Activated CD4-positive, alpha-beta memory T cell treated with anti-CD3 and anti-CD28 coated beads, Interleukin-2, amount 10 ng/mL, durations not matched to agents 7 days and 5 days (primary cell): ENCODE measurements at regions of chr11 and their contacts with region 1.

Region 1: GRCh38 chr11:111982019-111982464 is 43.2 kb upstream of the DLAT start:
- DNase-seq: peak; percentile 61
- H3K4me3 Mint-ChIP-seq: no peak overlapping the region
- H3K27ac Mint-ChIP-seq: no peak overlapping the region
- H3K4me1 Mint-ChIP-seq: peaks cover 7% of the 10 kb centered on the region
- H3K27me3 Mint-ChIP-seq: peaks cover 2% of the 10 kb centered on the region

Region 2: GRCh38 chr11:111932611-111932950 is 49.5 kb before region 1 on chr11:
- CTCF ChIA-PET with region 1: interaction called, 178 read pairs
- POLR2A ChIA-PET with region 1: interaction called, 12 read pairs
- DNase-seq: no peak
- H3K4me3 Mint-ChIP-seq: peak overlapping the region; percentile 49
- H3K27ac Mint-ChIP-seq: peak overlapping the region; percentile 19
- H3K4me1 Mint-ChIP-seq: peaks cover 27% of the 10 kb centered on the region
- H3K27me3 Mint-ChIP-seq: no peaks in the 10 kb centered on the region

Region 3: DNA sequence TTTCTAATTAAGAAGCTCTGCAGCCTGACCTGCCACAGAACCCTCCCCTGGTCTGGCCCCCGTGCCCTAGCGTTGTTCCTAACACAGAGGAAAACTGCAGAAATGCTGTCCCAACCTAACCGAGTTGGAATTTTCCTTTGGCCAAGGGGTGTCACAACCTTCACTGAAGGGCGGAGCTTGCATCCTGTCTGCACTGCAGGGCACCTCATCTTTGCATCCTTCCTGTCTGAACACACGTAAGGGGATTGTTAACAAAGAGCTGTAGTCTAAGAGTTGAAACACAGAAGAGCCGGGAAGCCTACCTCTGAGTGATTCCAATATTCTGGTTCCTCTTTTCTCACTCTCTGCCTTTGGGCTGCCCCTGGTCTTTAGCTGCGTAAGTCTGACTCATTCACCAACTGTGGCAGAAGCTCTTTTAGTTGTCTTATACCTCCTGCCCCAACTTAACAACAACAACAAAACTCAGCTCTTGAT is 43.3 kb before region 1 on chr11:
- CTCF ChIA-PET with region 1: interaction called, 178 read pairs
- POLR2A ChIA-PET with region 1: interaction called, 3 read pairs
- DNase-seq: peak; percentile 41
- H3K4me3 Mint-ChIP-seq: peak overlapping the region; percentile 85
- H3K27ac Mint-ChIP-seq: peak overlapping the region; percentile 60
- H3K4me1 Mint-ChIP-seq: peaks cover 43% of the 10 kb centered on the region
- H3K27me3 Mint-ChIP-seq: no peaks in the 10 kb centered on the region

Region 4: DNA sequence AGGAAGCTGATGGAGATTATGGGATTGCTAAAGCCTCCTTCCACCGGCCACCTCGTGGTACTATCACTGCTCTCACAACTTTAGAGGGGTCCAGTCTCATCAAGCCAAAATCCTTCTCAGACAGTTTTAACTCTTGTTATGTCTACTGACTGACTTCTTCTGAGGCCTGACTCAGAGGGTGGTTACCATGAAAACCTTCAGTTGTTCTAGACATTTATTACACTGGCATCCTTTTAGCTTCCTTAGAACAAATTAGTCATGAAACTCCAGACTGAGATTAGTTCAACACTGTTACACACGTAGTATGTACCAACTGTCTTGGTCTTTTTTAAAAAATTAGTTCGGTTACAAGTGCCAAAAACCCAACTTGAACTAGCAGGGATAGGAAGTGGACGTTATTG is 37.4 kb before region 1 on chr11:
- CTCF ChIA-PET with region 1: interaction called, 21 read pairs
- POLR2A ChIA-PET with region 1: no interaction called
- DNase-seq: no peak
- H3K4me3 Mint-ChIP-seq: no peak overlapping the region
- H3K27ac Mint-ChIP-seq: peak overlapping the region; percentile 69
- H3K4me1 Mint-ChIP-seq: peaks cover 22% of the 10 kb centered on the region
- H3K27me3 Mint-ChIP-seq: no peaks in the 10 kb centered on the region

Region 5: GRCh38 chr11:112226062-112226830 is 244.2 kb after region 1 on chr11 and contains the start of gene PTS:
- CTCF ChIA-PET with region 1: no interaction called
- POLR2A ChIA-PET with region 1: no interaction called
- DNase-seq: peak; percentile 87
- H3K4me3 Mint-ChIP-seq: peak within 1 kb of the TSS; percentile 80
- H3K27ac Mint-ChIP-seq: peak within 1 kb of the TSS; percentile 90
- H3K4me1 Mint-ChIP-seq: peaks cover 32% of the 10 kb centered on the region
- H3K27me3 Mint-ChIP-seq: no peaks in the 10 kb centered on the region
- total RNA-seq, gene PTS: 20.5 to 22.9 TPM